Activated T-helper 1 cell treated with anti-CD3 and anti-CD28 coated beads, Interleukin-12 subunit alpha, Interleukin-12 subunit beta, Interleukin-2, Interleukin-4 antibody, amounts not matched to agents 30 ng/mL and 10 ng/mL and 1 ng/mL, durations not matched to agents 14 hours and 24 hours and 36 hours (primary cell): ENCODE measurements at regions of chr16 and their contacts with region 1.

Region 1: DNA sequence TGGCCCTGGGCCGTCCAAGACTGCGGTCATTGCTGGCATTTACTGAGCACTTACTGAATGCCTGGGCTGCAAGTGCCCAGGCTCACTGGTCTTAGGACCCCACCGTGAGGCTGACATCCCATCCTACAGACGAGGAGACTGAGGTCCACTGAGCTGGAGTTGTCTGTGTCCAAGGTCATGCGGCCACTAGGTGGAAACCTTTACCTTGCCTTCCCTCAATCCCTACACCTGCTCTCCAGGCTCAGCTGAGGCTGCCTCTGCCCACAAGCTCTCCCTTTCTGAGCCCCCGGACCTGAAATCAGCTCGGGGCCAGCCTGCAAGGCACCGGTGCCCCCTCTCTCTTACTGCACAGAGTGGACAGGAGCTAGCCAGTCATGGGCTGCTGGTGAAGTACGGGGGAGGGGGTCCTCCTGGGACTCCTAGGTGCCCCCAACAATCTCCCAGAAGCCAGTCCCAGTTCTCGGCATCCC is 1.5 kb downstream of the CASKIN1 start:
- DNase-seq: peak; percentile 25
- H3K4me3 Mint-ChIP-seq: peak overlapping the region; percentile 15
- H3K27ac Mint-ChIP-seq: no peak overlapping the region
- H3K4me1 Mint-ChIP-seq: no peaks in the 10 kb centered on the region
- H3K27me3 Mint-ChIP-seq: peaks cover 32% of the 10 kb centered on the region

Region 2: DNA sequence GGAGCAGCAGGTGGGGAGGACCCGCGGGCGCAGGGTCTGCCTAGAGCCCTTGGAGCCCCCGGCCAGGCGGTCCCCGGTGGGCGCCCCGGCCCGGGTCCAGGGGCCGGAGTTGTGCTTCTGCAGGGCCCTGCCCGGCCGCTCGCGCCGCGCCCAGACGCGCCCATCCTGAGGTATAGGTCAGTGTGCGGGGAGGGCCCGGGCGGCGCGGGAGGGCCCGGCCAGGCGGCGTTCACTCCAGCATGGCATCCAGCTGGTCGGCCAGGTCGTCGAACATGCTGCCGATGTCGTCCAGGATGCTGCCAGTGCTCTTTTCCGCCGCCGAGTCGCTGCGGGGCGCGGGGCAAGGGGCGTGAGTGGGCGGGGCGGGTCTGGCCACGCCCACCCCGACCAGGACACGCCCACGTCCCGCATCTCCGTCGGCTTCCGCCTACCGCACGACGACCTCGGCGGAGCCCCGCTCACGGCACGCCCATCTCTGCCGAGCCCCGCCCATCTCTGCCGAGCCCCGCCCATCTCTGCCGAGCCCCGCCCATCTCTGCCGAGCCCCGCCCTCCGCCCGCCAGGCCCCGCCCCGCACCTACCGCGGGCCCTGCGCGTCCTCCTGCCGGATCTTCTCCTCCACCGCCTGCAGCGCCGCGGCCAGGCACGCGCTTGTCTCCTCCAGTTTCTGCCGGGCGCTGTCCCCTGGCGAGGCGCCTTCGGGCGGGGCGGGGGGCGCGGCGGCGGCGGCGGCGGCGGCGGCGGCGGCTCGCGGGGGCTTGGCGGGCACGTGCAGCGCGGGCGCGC is 16.4 kb before region 1 on chr16:
- intact Hi-C with region 1: no loop called
- DNase-seq: no peak
- H3K4me3 Mint-ChIP-seq: no peak overlapping the region
- H3K27ac Mint-ChIP-seq: no peak overlapping the region
- H3K4me1 Mint-ChIP-seq: no peaks in the 10 kb centered on the region
- H3K27me3 Mint-ChIP-seq: no peaks in the 10 kb centered on the region

Region 3: DNA sequence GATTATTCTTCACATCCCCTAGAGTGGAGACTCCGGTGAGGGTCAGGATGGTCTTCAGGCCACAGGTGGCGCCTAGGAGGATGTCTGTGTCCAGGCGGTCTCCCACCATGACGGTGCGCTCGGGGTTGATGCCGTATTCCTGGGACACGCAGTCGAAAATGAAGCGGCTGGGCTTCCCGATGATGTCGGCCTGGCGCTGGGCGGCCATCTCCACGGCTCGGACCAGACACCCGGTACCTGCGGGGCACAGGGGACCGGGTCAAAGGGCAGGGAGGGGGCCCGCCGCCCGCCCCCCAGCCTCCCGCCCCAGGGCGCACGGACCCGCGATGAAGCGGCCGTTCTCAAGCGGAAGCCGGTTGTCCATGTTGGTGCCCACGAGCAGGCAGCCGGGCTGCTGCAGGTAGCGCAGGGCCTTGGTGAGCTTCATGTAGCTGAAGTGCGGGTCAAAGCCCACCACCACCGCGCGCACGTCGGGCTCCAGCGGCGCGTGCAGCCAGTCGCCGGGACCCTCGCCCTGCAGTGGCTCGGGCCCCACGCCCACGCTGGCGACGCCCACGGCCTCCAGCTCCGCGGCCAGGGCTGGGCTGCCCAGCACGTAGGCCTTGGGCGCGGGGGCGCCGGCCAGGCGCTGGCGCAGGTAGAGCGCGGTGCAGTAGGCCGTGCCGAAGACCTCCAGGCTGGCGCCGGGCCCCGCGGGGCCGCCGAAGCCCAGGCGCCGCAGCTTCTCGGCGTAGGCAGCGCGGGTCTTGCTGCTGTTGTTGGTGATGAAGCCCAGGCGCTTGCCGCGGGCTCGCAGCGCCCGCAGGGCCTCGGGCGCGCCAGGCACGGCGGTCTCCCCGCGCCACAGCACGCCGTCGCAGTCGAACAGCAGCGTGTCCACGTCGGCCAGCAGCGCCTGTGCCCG is 19.2 kb after region 1 on chr16:
- intact Hi-C with region 1: no loop called
- DNase-seq: no peak
- H3K4me3 Mint-ChIP-seq: peak overlapping the region; percentile 87
- H3K27ac Mint-ChIP-seq: peak overlapping the region; percentile 65
- H3K4me1 Mint-ChIP-seq: peaks cover 18% of the 10 kb centered on the region
- H3K27me3 Mint-ChIP-seq: no peaks in the 10 kb centered on the region

Region 4: GRCh38 chr16:2500918-2501750 is 306.2 kb after region 1 on chr16:
- intact Hi-C with region 1: loop called (anchors 1 kb)
- DNase-seq: peak; percentile 67
- H3K4me3 Mint-ChIP-seq: no peak overlapping the region
- H3K27ac Mint-ChIP-seq: no peak overlapping the region
- H3K4me1 Mint-ChIP-seq: no peaks in the 10 kb centered on the region
- H3K27me3 Mint-ChIP-seq: no peaks in the 10 kb centered on the region